ENCODE measurements at regions of chr18 and their contacts with region 1.

Region 1: DNA sequence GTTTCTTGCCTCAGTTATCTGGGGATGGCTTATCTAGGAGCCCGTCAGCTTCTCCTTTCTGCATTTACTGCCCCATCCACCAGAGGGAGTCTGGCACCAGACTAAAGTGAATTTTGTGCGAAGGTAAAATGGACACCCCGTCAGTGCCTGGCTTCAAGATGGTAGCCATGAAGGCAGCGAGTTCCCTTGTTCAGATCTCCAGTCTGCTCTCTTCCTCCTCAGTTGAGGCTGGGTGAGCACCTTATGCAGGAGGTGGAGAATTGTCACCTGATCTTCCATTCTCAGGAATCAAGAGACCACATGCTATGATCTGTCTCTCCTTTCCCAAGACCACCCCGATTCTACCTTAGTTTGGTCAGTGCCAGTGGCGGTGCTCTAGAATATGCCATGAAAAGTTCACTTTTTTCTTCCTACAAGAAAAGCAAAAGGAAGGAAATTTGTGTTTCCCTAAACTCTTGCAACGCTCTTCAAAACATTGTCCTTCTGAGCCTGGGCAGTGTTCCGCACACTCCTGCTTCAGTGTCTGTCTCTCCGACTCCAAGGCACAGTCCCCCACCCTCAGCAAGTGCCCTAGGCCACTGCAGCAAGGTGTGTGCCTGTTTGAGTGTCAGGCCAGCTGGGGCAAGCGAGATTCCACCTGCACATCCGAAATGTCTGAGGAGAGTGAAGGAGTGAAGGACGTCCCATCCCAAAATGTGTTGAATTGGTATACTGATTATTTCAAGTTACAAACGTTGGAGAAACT is 168.6 kb downstream of the SS18 start:
- DNase-seq: no peak
- H3K4me3 ChIP-seq: no peak overlapping the region
- H3K27ac ChIP-seq: no peak overlapping the region
- H3K4me1 ChIP-seq: peaks cover 2% of the 10 kb centered on the region
- H3K27me3 ChIP-seq: no peaks in the 10 kb centered on the region
- CTCF ChIP-seq: no peak
- EP300 ChIP-seq: no peak
- POLR2A ChIP-seq: no peak

Region 2: DNA sequence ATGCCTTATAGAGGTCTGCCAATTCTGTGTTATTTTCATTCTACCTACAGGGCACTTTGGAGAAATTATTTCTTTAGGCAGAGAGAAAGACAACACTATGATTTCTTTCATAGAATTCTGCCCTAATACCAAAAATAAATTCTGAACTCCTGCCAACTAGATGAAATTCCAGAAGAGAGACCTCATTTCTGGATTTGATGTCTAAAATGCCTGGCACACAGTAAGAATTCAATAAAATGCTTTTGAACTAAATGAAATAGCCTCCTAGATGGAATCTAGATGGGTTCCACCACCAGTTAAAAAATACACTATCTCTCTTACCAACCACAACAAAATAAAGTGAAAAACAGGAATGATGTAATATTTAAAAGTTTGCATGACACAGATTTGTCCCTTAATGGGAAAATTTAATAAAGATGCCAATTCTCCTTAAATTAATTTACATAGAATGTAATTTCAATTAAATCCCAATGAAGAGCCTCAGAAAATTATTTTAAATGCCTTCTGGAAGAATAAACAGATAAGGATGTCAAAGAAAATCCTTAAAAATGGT is 1599.2 kb before region 1 on chr18:
- intact Hi-C with region 1: loop called in 1 of 4 experiments (anchors 5 kb)
- DNase-seq: no peak
- H3K4me3 ChIP-seq: no peak overlapping the region
- H3K27ac ChIP-seq: no peak overlapping the region
- H3K4me1 ChIP-seq: peaks cover 3% of the 10 kb centered on the region
- H3K27me3 ChIP-seq: no peaks in the 10 kb centered on the region
- CTCF ChIP-seq: no peak
- EP300 ChIP-seq: no peak
- POLR2A ChIP-seq: no peak

Measured in ovary (tissue), 10 donors.